Transverse colon (tissue), 4 donors: ENCODE measurements at regions of chr17 and their contacts with region 1.

Region 1: DNA sequence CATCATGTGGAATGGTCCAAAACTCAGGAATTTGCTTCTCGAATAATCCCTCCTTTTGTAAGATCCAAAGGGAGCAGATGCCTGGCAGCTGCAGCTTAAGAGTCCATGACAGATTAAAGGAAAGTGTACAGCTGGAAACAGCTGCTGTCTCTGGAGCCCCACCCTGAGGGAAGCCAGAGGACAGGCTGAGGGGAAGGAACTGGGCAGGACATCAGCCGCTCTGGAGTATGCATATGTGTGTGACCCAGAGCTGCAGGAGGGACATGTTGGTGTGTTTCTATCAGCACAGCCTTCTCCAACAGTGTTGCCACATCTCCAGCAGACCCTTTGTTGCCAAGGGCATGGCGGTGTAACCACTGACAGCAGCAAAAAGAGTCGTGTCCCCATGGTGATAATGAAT is 46.2 kb downstream of the CYB561 start:
- DNase-seq: peak; percentile 40
- H3K4me3 ChIP-seq: no peak overlapping the region
- H3K27ac ChIP-seq: peak overlapping the region in 3 of 4 donors; percentile 27 to 64 (median 42)
- H3K4me1 ChIP-seq: peaks cover 0 to 18% (median 4%) of the 10 kb centered on the region in 4 donors
- H3K27me3 ChIP-seq: no peaks in the 10 kb centered on the region
- CTCF ChIP-seq: no peak
- EP300 ChIP-seq: no peak
- POLR2A ChIP-seq: no peak

Region 2: GRCh38 chr17:63082273-63082993 is 317.4 kb before region 1 on chr17:
- in situ Hi-C with region 1: loop called in 3 of 4 experiments (anchors 25 kb)
- intact Hi-C with region 1: no loop called
- DNase-seq: no peak
- H3K4me3 ChIP-seq: no peak overlapping the region
- H3K27ac ChIP-seq: no peak overlapping the region
- H3K4me1 ChIP-seq: no peaks in the 10 kb centered on the region
- H3K27me3 ChIP-seq: no peaks in the 10 kb centered on the region
- CTCF ChIP-seq: peak in 4 of 5 experiments; percentile 3 to 46 (median 30)
- EP300 ChIP-seq: no peak
- POLR2A ChIP-seq: no peak